Breast epithelium (tissue), 4 donors: ENCODE measurements at regions of chr3 and their contacts with region 1.

Region 1: GRCh38 chr3:1007866-1008265 is 85.0 kb upstream of the CNTN6 start:
- DNase-seq: no peak
- H3K4me3 ChIP-seq: no peak overlapping the region
- H3K27ac ChIP-seq: no peak overlapping the region
- H3K4me1 ChIP-seq: no peaks in the 10 kb centered on the region
- H3K27me3 ChIP-seq: no peaks in the 10 kb centered on the region
- CTCF ChIP-seq: no peak
- POLR2A ChIP-seq: no peak

Region 2: GRCh38 chr3:1056744-1057143 is 48.9 kb after region 1 on chr3:
- intact Hi-C with region 1: loop called (anchors 2 kb)
- DNase-seq: no peak
- H3K4me3 ChIP-seq: peak overlapping the region in 1 of 3 donors; percentile 4
- H3K27ac ChIP-seq: no peak overlapping the region
- H3K4me1 ChIP-seq: no peaks in the 10 kb centered on the region
- H3K27me3 ChIP-seq: no peaks in the 10 kb centered on the region
- CTCF ChIP-seq: no peak
- POLR2A ChIP-seq: no peak